CD4-positive, alpha-beta T cell (primary cell): ENCODE measurements at regions of chr9 and their contacts with region 1.

Region 1: DNA sequence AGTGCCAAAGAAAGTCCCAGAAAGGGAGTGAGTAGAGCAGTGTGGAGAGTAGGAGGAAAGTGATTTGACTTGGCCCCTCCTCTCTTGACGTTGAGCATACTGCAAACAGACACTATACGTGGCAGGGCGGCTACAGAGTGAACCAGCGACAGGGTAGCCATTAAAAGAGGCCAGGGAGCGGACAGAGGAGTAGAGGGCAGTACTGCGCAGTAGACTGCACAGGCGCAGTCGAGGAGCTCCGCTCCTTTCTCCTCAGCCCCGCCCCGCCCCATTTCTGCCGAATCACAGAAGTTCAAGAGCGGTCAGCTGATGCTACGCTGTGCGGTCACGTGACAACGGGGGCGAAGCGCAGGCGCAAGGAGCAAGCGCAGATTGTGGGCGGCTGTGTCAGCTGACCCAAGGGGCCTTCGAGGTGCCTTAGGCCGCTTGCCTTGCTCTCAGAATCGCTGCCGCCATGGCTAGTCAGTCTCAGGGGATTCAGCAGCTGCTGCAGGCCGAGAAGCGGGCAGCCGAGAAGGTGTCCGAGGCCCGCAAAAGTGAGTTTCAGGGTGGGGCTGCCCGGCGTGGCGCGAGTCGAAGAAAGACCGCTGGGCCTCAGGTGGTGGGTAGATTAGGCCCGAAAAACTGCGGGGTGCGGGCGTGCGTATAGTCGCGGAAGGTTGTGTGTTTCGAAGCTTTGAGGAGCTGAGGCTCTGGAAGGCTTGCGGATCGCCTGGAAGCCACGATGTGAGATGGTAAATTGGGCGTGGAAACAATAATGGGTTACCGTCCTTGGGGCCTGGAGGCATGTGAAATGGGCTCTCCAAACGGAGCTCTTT is at the start of gene ATP6V1G1:
- DNase-seq: peak; percentile 97 to 100 (median 99)
- ATAC-seq: peak; percentile 90
- H3K4me3 ChIP-seq: peak within 1 kb of the TSS; percentile 89
- H3K4me3 Mint-ChIP-seq: peak within 1 kb of the TSS; percentile 99
- H3K27ac ChIP-seq: peak within 1 kb of the TSS; percentile 91 to 94
- H3K27ac Mint-ChIP-seq: peak within 1 kb of the TSS; percentile 99
- H3K4me1 ChIP-seq: peaks cover 47% of the 10 kb centered on the region
- H3K4me1 Mint-ChIP-seq: peaks cover 55% of the 10 kb centered on the region
- H3K27me3 ChIP-seq: no peaks in the 10 kb centered on the region
- H3K27me3 Mint-ChIP-seq: no peaks in the 10 kb centered on the region
- CTCF ChIP-seq: no peak
- total RNA-seq, gene ATP6V1G1: 144 to 148 TPM

Region 2: GRCh38 chr9:114339130-114339908 is 248.3 kb before region 1 on chr9:
- CTCF ChIA-PET with region 1: no interaction called
- POLR2A ChIA-PET with region 1: interaction called, 3 read pairs
- intact Hi-C with region 1: loop called in 1 of 2 experiments (anchors 5 kb)
- DNase-seq: peak; percentile 23 to 75 (median 44)
- ATAC-seq: peak; percentile 67
- H3K4me3 ChIP-seq: no peak overlapping the region
- H3K4me3 Mint-ChIP-seq: no peak overlapping the region
- H3K27ac ChIP-seq: peak overlapping the region in 1 of 2 donors; percentile 40
- H3K27ac Mint-ChIP-seq: peak overlapping the region; percentile 62
- H3K4me1 ChIP-seq: peaks cover 11% of the 10 kb centered on the region
- H3K4me1 Mint-ChIP-seq: peaks cover 16% of the 10 kb centered on the region
- H3K27me3 ChIP-seq: no peaks in the 10 kb centered on the region
- H3K27me3 Mint-ChIP-seq: no peaks in the 10 kb centered on the region
- CTCF ChIP-seq: peak; percentile 89

Region 3: GRCh38 chr9:114405294-114406034 is 182.1 kb before region 1 on chr9:
- CTCF ChIA-PET with region 1: interaction called, 9 read pairs
- POLR2A ChIA-PET with region 1: interaction called, 10 read pairs
- intact Hi-C with region 1: loop called in 1 of 2 experiments (anchors 2 kb)
- DNase-seq: peak; percentile 69 to 91 (median 75)
- ATAC-seq: peak; percentile 100
- H3K4me3 ChIP-seq: no peak overlapping the region
- H3K4me3 Mint-ChIP-seq: peak overlapping the region; percentile 30
- H3K27ac ChIP-seq: no peak overlapping the region
- H3K27ac Mint-ChIP-seq: peak overlapping the region; percentile 6
- H3K4me1 ChIP-seq: peaks cover 11% of the 10 kb centered on the region
- H3K4me1 Mint-ChIP-seq: peaks cover 7% of the 10 kb centered on the region
- H3K27me3 ChIP-seq: no peaks in the 10 kb centered on the region
- H3K27me3 Mint-ChIP-seq: no peaks in the 10 kb centered on the region
- CTCF ChIP-seq: peak; percentile 90

Region 4: DNA sequence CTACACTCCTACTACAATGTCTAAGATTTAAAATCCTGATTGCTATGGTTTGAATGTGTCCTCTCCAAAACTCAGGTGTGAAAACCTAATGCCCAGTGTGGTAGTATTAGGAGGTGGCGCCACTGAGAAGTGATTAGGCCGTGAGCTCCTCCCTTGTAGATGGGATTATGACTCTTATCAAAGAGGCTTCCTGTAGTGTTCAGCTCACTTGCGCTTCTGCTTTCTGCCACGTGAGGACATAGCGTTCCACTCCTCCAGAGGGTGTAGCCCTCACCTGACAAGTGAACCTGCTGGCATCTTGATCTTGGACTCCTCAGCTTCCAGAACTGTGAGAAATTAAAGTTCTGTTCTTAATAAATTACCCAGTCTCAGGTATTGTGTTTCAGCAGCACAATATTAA is 49.4 kb before region 1 on chr9:
- CTCF ChIA-PET with region 1: interaction called, 3 read pairs
- POLR2A ChIA-PET with region 1: interaction called, 10 read pairs
- intact Hi-C with region 1: no loop called
- DNase-seq: peak in 12 of 14 experiments; percentile 4 to 64 (median 22)
- ATAC-seq: peak; percentile 95
- H3K4me3 ChIP-seq: no peak overlapping the region
- H3K4me3 Mint-ChIP-seq: no peak overlapping the region
- H3K27ac ChIP-seq: no peak overlapping the region
- H3K27ac Mint-ChIP-seq: no peak overlapping the region
- H3K4me1 ChIP-seq: peaks cover 2% of the 10 kb centered on the region
- H3K4me1 Mint-ChIP-seq: peaks cover 13% of the 10 kb centered on the region
- H3K27me3 ChIP-seq: no peaks in the 10 kb centered on the region
- H3K27me3 Mint-ChIP-seq: no peaks in the 10 kb centered on the region
- CTCF ChIP-seq: peak; percentile 33

Region 5: GRCh38 chr9:114603248-114603647 is 15.7 kb after region 1 on chr9:
- CTCF ChIA-PET with region 1: interaction called, 16 read pairs
- POLR2A ChIA-PET with region 1: interaction called, 12 read pairs
- intact Hi-C with region 1: no loop called
- DNase-seq: no peak
- ATAC-seq: no peak
- H3K4me3 ChIP-seq: no peak overlapping the region
- H3K4me3 Mint-ChIP-seq: no peak overlapping the region
- H3K27ac ChIP-seq: no peak overlapping the region
- H3K27ac Mint-ChIP-seq: no peak overlapping the region
- H3K4me1 ChIP-seq: no peaks in the 10 kb centered on the region
- H3K4me1 Mint-ChIP-seq: peaks cover 15% of the 10 kb centered on the region
- H3K27me3 ChIP-seq: no peaks in the 10 kb centered on the region
- H3K27me3 Mint-ChIP-seq: no peaks in the 10 kb centered on the region
- CTCF ChIP-seq: no peak

Region 6: GRCh38 chr9:114616653-114617520 is 29.3 kb after region 1 on chr9:
- CTCF ChIA-PET with region 1: interaction called, 16 read pairs
- POLR2A ChIA-PET with region 1: interaction called, 113 read pairs
- intact Hi-C with region 1: loop called (anchors 1 to 2 kb)
- DNase-seq: peak in 9 of 14 experiments; percentile 5 to 65 (median 21)
- ATAC-seq: peak; percentile 28
- H3K4me3 ChIP-seq: no peak overlapping the region
- H3K4me3 Mint-ChIP-seq: peak overlapping the region; percentile 66
- H3K27ac ChIP-seq: peak overlapping the region; percentile 23 to 54
- H3K27ac Mint-ChIP-seq: peak overlapping the region; percentile 85
- H3K4me1 ChIP-seq: peaks cover 41% of the 10 kb centered on the region
- H3K4me1 Mint-ChIP-seq: peaks cover 59% of the 10 kb centered on the region
- H3K27me3 ChIP-seq: no peaks in the 10 kb centered on the region
- H3K27me3 Mint-ChIP-seq: no peaks in the 10 kb centered on the region
- CTCF ChIP-seq: no peak

Region 7: GRCh38 chr9:114919611-114920010 is 332.0 kb after region 1 on chr9:
- CTCF ChIA-PET with region 1: no interaction called
- POLR2A ChIA-PET with region 1: no interaction called
- intact Hi-C with region 1: loop called in 1 of 2 experiments (anchors 5 kb)
- DNase-seq: no peak
- ATAC-seq: no peak
- H3K4me3 ChIP-seq: no peak overlapping the region
- H3K4me3 Mint-ChIP-seq: no peak overlapping the region
- H3K27ac ChIP-seq: no peak overlapping the region
- H3K27ac Mint-ChIP-seq: peak overlapping the region; percentile 46
- H3K4me1 ChIP-seq: peaks cover 68% of the 10 kb centered on the region
- H3K4me1 Mint-ChIP-seq: peaks cover 96% of the 10 kb centered on the region
- H3K27me3 ChIP-seq: no peaks in the 10 kb centered on the region
- H3K27me3 Mint-ChIP-seq: no peaks in the 10 kb centered on the region
- CTCF ChIP-seq: no peak